ENCODE measurements at regions of chr1 and their contacts with region 1.

Region 1: DNA sequence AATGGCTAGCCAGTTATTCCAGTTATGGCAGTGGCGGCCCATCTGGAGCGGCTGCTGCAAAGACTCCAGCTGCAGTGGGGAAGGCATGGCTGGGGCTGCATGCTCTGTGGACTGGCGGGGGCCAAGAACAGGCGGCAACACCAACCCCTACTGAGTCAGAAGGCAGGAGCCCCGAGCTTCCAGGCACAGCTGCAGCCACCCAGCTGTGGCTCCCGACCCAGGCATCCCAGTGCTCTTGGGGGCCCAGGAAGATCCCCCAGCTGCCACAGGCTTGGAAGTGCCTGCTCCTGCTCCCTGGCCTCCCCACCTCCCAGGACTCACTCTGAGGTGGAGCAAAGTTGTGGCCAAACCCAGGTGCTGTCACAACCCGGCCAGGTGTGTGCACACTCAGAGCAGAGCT is 317.0 kb upstream of the RRP15 start:
- DNase-seq: no peak
- H3K4me3 ChIP-seq: no peak overlapping the region
- H3K27ac ChIP-seq: no peak overlapping the region
- H3K4me1 ChIP-seq: no peaks in the 10 kb centered on the region
- H3K27me3 ChIP-seq: no peaks in the 10 kb centered on the region
- CTCF ChIP-seq: no peak
- POLR2A ChIP-seq: no peak

Region 2: DNA sequence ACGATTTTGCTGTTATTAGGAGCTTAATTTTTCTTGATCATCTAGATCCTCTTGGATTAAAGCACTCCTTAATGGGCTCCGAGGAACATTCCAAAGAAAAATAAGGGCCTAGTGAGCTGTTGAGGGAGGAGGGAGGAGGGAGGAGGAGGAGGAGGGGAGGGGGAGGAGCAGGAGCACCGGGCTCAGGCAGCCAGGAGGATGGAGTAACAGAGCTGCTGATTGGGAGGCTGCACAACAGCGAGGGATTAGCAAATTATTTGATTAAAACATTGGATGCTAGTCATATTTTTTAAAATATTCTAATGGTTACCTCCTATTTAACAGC is 14.9 kb after region 1 on chr1:
- intact Hi-C with region 1: loop called (anchors 1 kb)
- DNase-seq: no peak
- H3K4me3 ChIP-seq: no peak overlapping the region
- H3K27ac ChIP-seq: no peak overlapping the region
- H3K4me1 ChIP-seq: no peaks in the 10 kb centered on the region
- H3K27me3 ChIP-seq: no peaks in the 10 kb centered on the region
- CTCF ChIP-seq: no peak
- POLR2A ChIP-seq: no peak

Region 3: DNA sequence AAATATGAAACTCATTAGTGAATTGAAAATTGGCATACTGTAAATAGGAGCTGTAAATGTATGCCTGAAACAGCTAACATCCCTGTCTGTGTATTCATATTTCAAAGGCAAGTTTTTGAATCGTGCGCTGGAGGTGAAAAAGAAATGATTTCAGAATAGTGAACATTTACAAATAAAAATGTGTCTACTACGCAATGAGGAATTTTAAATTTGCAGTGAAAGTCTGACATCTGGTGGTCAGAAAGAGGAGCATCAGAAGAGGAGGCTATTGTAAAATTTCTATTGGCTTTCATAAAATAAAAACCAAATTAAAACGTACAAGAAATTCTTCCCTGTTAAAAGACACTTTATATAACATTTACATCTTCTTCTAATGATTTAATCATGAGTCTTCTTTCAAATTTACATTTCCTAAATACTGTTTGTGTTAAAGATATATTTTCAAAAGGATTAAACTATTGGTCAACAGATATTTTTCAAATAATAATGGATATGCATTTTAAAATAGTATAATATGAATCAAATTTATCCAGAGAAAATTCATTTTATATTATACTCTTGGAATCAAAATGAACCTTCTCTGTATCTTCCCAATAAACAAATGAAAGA is 203.3 kb after region 1 on chr1:
- intact Hi-C with region 1: no loop called
- DNase-seq: no peak
- H3K4me3 ChIP-seq: no peak overlapping the region
- H3K27ac ChIP-seq: no peak overlapping the region
- H3K4me1 ChIP-seq: no peaks in the 10 kb centered on the region
- H3K27me3 ChIP-seq: peaks cover 0 to 26% of the 10 kb centered on the region in 2 donors
- CTCF ChIP-seq: peak; percentile 33 to 67 (median 63)
- POLR2A ChIP-seq: no peak

Region 4: DNA sequence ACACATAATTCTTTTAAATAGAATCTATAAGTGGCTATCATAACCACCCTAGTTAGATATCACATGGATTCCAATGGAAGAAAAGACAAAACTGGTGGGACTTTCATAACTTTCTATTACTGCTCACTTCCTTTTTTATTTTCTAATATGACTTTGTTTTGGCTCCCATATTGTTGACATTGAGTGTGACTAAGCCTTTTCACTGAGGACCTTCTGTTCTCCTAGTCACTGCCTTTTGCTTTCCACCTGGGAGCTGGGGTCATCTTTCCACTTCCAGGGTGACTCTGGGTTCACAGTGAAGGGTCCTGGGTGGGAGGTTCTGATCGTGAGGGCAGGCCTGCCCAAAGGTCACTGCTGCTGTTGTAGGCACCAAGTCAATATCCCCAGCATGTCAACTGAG is 652.9 kb after region 1 on chr1:
- intact Hi-C with region 1: no loop called
- DNase-seq: no peak
- H3K4me3 ChIP-seq: no peak overlapping the region
- H3K27ac ChIP-seq: no peak overlapping the region
- H3K4me1 ChIP-seq: no peaks in the 10 kb centered on the region
- H3K27me3 ChIP-seq: no peaks in the 10 kb centered on the region
- CTCF ChIP-seq: no peak
- POLR2A ChIP-seq: no peak

Measured in breast epithelium (tissue), 4 donors.